WTC11 (cell line): ENCODE measurements at regions of chr11 and their contacts with region 1.

Region 1: GRCh38 chr11:127825183-127825582 is 762.2 kb downstream of the ETS1 start:
- DNase-seq: no peak
- ATAC-seq: no peak
- H3K4me3 Mint-ChIP-seq: no peak overlapping the region
- H3K27ac Mint-ChIP-seq: no peak overlapping the region
- H3K4me1 Mint-ChIP-seq: peaks cover 5% of the 10 kb centered on the region
- H3K27me3 Mint-ChIP-seq: no peaks in the 10 kb centered on the region
- CTCF ChIP-seq: no peak

Region 2: GRCh38 chr11:127843483-127844396 is 18.6 kb after region 1 on chr11:
- CTCF ChIA-PET with region 1: interaction called, 10 read pairs
- POLR2A ChIA-PET with region 1: no interaction called
- DNase-seq: peak; percentile 89
- ATAC-seq: peak; percentile 89
- H3K4me3 Mint-ChIP-seq: no peak overlapping the region
- H3K27ac Mint-ChIP-seq: no peak overlapping the region
- H3K4me1 Mint-ChIP-seq: peaks cover 6% of the 10 kb centered on the region
- H3K27me3 Mint-ChIP-seq: no peaks in the 10 kb centered on the region
- CTCF ChIP-seq: peak; percentile 69; the same call in 1 of the 2 replicates

Region 3: GRCh38 chr11:127862406-127862805 is 37.2 kb after region 1 on chr11:
- CTCF ChIA-PET with region 1: no interaction called
- POLR2A ChIA-PET with region 1: no interaction called
- DNase-seq: no peak
- ATAC-seq: no peak
- H3K4me3 Mint-ChIP-seq: no peak overlapping the region
- H3K27ac Mint-ChIP-seq: no peak overlapping the region
- H3K4me1 Mint-ChIP-seq: no peaks in the 10 kb centered on the region
- H3K27me3 Mint-ChIP-seq: no peaks in the 10 kb centered on the region
- CTCF ChIP-seq: no peak

Region 4: DNA sequence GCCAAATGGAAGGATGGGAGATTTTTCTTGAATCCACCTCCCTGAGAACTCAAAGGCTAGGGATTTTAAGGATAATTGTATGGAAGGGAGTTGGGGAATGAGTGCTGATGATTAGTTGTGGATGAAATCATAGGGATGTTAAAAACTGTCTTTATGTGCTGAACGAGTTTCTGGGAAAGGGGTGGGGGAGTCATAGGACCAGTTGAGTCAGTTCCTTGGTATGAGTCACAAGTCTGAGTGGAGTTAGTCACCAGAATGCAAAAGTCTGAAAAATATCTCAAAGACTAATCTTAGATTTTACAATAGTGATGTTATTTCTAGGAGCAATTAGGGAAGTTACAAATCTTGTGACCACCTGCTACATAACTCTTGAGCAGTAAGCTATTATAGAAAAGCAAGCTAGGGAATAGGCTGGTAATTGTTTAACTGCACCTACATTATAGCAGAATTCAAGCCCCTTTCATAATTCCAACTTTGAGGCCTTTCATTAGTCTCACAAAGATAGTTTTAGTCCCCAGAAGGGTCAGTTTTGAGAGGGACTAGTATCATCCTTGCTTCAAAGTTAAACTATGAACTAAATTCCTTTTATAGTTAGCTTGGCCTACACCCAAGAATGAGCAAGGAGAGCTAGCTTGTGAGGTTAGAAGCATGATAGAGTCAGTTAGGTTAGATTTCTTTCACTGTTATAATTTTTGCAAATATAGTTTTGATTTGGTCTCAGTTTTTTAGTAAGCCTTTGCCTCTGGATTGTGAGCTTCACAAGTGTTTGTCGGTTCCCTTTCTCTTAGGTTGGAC is 94.2 kb after region 1 on chr11:
- CTCF ChIA-PET with region 1: no interaction called
- POLR2A ChIA-PET with region 1: no interaction called
- DNase-seq: no peak
- ATAC-seq: no peak
- H3K4me3 Mint-ChIP-seq: no peak overlapping the region
- H3K27ac Mint-ChIP-seq: no peak overlapping the region
- H3K4me1 Mint-ChIP-seq: no peaks in the 10 kb centered on the region
- H3K27me3 Mint-ChIP-seq: no peaks in the 10 kb centered on the region; the same call in none of the 2 replicates
- CTCF ChIP-seq: no peak